ENCODE measurements at regions of chr1 and their contacts with region 1.

Region 1: DNA sequence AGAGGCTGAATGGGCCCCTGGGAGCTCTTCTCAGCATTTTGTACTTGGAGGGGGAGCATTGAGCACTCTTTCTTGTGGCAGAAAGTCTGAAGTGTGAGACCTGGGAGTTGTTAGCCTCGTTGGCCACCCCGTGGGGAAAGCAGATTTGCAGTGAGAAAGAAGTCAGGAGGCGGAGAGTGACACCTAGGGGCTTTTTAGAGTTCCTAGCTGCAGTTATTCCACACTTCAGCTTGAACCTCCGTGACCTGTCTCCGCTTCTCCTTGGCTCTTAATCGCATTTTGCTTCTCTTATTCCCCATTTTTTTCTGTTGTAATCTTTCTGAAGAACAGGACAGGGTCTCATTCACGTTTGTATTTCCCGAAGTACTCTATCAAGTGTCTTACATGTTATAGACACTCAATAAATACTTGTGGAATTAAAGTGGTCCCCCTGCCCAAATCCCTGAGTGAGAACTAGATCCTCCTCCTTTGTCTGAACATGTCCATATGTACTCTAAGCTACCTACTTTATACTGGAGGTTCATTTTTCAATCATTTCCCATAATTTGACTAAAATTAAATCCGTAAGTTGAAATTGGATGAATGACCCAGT is 14.5 kb upstream of the C1orf141 start:
- DNase-seq: peak; percentile 85
- H3K4me3 Mint-ChIP-seq: no peak overlapping the region
- H3K27ac Mint-ChIP-seq: no peak overlapping the region
- H3K4me1 Mint-ChIP-seq: peaks cover 42% of the 10 kb centered on the region
- H3K27me3 Mint-ChIP-seq: peaks cover 5% of the 10 kb centered on the region

Region 2: DNA sequence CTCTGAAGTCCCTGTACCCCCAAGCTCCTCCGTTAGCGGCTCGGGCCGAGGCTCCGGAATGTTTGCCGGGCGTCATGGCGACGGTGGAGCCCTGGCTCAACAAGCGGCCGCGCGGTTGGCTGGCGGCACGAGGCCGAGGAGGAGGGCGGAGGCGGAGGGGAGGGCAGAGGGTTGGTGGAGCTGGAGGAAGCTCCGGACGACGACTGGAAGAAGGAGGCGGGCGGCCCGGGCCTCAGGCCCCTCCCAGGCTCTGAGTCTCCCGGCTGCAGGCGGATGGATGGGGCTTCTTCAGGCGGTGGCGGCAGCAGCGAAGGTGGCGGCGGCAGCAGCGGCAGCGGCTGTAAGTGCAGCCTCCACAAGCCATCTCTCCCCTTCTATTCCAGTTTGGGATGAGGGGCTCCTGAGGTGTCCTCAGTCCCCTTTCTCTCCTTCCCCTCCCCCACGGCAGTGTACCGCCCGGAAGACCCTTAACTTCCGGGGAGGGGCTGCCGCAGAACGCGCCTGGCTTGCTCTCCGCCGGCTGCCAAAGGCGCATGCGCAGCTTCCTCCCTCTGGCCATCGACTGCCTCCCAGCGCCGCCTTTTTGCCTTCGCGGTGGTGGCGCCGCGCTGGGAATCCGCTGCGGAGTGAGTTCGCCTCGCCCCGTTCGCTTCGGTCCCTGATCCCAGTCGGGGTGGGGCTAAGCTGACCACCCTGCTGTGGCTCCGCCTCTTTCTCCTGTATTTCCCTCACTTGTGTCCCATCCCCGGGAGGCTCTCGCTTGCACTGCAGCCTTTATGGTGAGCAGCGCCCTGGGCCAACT is 224.3 kb before region 1 on chr1 and contains the starts of genes DNAI4 and MIER1:
- CTCF ChIA-PET with region 1: interaction called, 4 read pairs
- intact Hi-C with region 1: loop called (anchors 2 kb)
- DNase-seq: peak; percentile 98
- H3K4me3 Mint-ChIP-seq: peak within 1 kb of the TSS; percentile 92
- H3K27ac Mint-ChIP-seq: peak within 1 kb of the TSS; percentile 95
- H3K4me1 Mint-ChIP-seq: peaks cover 50% of the 10 kb centered on the region
- H3K27me3 Mint-ChIP-seq: no peaks in the 10 kb centered on the region
- total RNA-seq, gene DNAI4: 0.83 to 1.5 TPM
- total RNA-seq, gene MIER1: 56.5 to 58.3 TPM

Region 3: DNA sequence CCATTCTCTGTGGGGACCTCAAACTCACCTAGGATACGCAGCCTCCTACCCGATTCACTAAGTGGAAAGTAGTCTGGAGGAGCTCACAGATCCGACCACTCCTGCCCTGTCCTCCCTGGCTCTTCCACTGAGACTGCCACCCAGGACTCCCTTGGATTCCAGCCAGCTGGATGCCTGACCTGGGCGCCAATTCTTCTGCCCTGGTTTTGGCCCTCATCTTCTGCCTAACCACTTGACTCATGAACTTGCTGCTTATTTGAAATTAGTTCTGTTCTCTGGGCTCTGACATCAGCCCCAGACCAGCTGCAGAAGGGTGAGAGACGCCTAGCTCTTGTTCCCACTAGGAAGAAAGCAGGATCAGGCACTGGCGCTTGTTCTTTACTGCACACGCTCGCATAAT is 144.2 kb before region 1 on chr1:
- CTCF ChIA-PET with region 1: interaction called, 28 read pairs
- intact Hi-C with region 1: no loop called
- DNase-seq: no peak
- H3K4me3 Mint-ChIP-seq: no peak overlapping the region
- H3K27ac Mint-ChIP-seq: no peak overlapping the region
- H3K4me1 Mint-ChIP-seq: peaks cover 10% of the 10 kb centered on the region
- H3K27me3 Mint-ChIP-seq: no peaks in the 10 kb centered on the region

Region 4: DNA sequence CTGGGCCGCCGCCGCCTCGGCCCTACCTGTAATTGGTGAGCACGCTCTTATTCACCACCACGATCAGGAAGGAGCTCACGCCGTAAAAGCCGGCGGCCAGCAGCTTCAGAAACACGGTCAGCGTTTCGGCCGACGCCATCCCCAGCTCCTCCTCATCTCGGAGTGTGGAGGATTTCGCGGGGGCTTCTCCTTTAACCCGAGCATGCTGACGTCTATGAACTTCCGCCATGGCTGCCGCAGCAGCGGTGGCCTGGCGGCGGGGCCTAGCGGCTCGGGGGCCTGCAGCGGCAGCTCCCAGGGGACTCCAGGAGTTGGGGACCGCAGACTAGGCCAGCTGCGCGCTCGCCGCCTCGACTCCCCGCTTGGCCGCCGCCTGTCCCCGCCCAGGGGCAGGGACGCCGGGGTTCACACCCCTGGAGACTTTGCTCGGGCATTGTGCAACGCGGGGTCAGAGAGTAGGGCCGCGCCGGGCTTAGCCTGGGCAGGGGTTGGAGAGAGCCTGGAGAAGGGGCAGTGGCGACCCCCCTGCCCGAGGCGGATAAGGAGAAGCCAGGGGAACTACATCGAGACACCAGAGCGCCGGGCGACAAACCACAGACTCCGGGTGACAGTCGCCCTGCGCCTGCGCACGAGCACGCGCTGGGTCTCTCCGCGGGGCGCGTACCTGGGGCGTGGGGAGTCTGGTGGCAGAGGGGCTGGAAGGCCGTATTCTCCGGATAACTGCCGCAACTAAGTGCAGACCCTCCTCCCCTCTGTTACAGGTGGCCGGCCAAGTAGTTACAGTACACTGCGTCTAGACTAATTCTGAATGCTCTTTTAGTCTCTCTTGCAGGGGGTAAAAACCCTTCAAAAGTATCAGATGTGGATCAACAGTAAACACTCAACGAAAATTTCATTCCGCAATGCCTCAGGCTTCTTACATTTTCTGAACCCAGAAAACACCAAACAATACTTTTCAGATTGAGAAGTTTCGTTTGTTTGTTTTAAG is 95.2 kb before region 1 on chr1 and contains the start of gene SLC35D1:
- CTCF ChIA-PET with region 1: interaction called, 14 read pairs
- intact Hi-C with region 1: loop called (anchors 1 kb)
- DNase-seq: peak; percentile 81
- H3K4me3 Mint-ChIP-seq: peak within 1 kb of the TSS; percentile 82
- H3K27ac Mint-ChIP-seq: peak within 1 kb of the TSS; percentile 93
- H3K4me1 Mint-ChIP-seq: peaks cover 19% of the 10 kb centered on the region
- H3K27me3 Mint-ChIP-seq: no peaks in the 10 kb centered on the region
- total RNA-seq, gene SLC35D1: 10.5 to 11.1 TPM

Region 5: DNA sequence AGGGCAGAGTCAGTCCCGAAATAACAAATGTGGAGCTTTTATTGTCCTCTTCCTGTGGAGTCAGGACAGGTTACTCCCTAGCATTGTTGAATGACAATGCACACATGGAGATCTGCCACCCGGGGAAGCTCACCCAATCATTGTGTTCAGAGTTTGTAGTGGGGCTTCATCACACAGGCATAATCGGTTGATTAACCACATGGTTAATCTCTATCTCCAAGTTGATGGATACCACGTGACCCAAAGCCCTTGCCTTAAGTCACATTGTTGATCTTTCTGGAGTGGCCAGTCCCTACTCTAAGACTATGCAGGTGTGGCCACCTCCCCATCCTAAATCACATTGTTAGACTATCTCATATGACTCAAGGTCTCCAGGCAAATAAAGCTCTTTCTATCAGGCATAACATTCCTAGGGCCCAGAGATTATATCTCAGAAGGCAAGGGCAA is 11.9 kb before region 1 on chr1:
- CTCF ChIA-PET with region 1: interaction called, 21 read pairs
- intact Hi-C with region 1: no loop called
- DNase-seq: no peak
- H3K4me3 Mint-ChIP-seq: no peak overlapping the region
- H3K27ac Mint-ChIP-seq: no peak overlapping the region
- H3K4me1 Mint-ChIP-seq: peaks cover 18% of the 10 kb centered on the region
- H3K27me3 Mint-ChIP-seq: peaks cover 3% of the 10 kb centered on the region

Region 6: DNA sequence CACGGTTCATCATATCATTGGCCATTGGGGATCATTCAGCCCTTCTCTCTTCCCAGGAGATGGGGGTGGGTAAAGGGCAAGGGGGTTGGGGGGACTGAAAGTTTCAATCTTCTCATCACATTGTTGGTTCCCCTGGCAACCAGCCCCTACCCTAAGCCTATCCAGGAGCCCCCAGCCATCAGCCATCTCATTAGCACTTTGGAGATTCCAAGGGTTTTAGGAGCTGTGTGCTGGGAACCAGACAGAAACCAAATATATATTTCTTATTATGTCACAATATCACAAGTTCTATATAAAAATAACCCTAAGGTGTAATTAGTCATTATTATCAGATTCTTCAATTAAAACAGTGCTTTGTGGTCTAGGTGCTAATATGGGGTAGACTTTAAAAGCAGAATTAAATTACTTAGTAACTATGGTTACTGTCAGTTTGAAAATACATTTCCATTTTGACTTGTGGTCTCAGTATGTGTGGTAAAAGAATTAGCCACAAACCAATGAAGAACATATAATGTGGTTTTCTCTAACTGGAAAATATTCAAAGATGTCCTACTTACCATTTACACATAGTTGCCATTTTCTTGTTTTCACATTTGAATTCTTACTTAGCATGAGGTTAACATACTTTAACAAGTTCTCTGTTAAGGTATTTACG is 45.1 kb after region 1 on chr1:
- CTCF ChIA-PET with region 1: interaction called, 7 read pairs
- intact Hi-C with region 1: loop called (anchors 1 kb)
- DNase-seq: no peak
- H3K4me3 Mint-ChIP-seq: no peak overlapping the region
- H3K27ac Mint-ChIP-seq: no peak overlapping the region
- H3K4me1 Mint-ChIP-seq: peaks cover 39% of the 10 kb centered on the region
- H3K27me3 Mint-ChIP-seq: no peaks in the 10 kb centered on the region